ENCODE measurements at regions of chr16 and their contacts with region 1.

Region 1: DNA sequence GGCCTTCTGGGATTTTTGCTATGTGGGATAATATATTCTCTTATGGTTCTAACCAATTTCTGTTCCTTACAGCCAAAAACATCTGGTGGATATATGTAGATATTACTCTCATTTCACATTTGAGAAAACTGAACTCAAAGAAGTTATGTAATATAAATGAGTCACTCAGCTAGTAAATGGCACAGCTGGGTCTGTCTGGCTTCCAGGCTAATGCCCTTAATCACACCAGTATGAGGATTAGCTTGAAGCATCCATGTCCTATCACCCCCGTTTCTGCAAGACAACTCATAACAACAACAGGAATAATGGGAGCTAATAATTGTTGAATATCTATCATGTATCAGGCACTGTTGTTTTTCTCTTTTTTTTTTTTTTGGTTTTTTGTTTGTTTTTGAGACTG is 34.4 kb upstream of the USP7 start:
- DNase-seq: no peak
- H3K4me3 ChIP-seq: no peak overlapping the region
- CTCF ChIP-seq: no peak

Region 2: GRCh38 chr16:8928467-8928957 is 69.6 kb before region 1 on chr16:
- in situ Hi-C with region 1: loop called (anchors 5 kb)
- DNase-seq: no peak
- H3K4me3 ChIP-seq: no peak overlapping the region
- CTCF ChIP-seq: no peak